ENCODE measurements at regions of chr17 and their contacts with region 1.

Region 1: GRCh38 chr17:77542551-77543490 is 402.1 kb downstream of the SEC14L1 start:
- DNase-seq: peak; percentile 79 to 93
- H3K4me3 ChIP-seq: no peak overlapping the region
- CTCF ChIP-seq: peak in 1 of 3 donors; percentile 63
- POLR2A ChIP-seq: no peak

Region 2: GRCh38 chr17:77829843-77830799 is 287.3 kb after region 1 on chr17:
- intact Hi-C with region 1: no loop called
- DNase-seq: peak in 1 of 2 donors; percentile 32
- H3K4me3 ChIP-seq: no peak overlapping the region
- CTCF ChIP-seq: no peak
- POLR2A ChIP-seq: no peak

Region 3: GRCh38 chr17:78013683-78014467 is 471.1 kb after region 1 on chr17:
- intact Hi-C with region 1: loop called (anchors 5 kb)
- DNase-seq: peak in 1 of 2 donors; percentile 56
- H3K4me3 ChIP-seq: no peak overlapping the region
- CTCF ChIP-seq: no peak
- POLR2A ChIP-seq: no peak